MCF 10A (cell line): ENCODE measurements at regions of chr9 and their contacts with region 1.

Region 1: DNA sequence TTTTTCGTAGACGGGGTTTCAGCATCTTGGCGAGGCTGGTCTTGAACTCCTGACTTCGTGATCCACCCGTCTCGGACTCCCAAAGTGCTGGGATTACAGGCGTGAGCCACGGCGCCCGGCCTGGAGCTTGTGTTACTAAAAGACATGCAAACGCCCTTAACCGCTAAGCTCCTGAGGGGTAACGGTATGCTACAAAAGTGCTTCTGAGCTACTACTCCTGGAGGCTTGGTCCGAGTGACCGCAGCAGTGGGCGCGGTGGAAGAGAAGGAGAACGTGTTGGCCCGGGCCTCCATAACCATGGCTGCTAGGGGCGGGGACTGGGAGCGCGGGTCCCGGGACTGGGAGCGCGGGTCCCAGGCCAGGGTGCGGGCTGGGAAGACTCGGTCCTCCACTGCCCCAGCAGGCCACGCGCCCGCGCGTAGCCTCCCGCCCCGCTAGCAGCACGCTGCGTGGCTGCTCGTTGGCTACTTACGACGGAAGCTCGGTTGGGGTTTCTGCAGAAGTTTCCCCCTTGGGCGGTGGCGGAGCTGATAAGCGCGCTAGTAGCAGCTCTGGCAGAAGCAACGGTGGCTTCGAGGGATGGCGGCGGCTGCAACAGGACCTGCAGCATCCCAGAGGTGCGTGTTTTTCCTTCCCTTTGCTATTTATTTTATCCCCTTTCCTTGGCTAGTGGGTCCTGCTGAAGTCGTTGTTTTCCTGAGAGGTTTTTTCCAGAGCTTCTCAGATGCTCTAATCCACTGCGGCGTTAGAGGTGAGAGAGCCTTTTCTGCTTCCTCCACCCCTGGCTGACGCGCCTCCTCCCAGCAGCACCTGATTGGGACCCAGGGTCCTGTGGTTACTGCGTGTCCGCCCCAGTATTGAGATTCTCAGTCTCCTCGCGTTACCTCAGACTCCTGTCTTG is 69.3 kb upstream of the CCDC180 start:
- DNase-seq: peak; percentile 84
- H3K4me3 Mint-ChIP-seq: peak overlapping the region; percentile 92
- H3K27ac Mint-ChIP-seq: peak overlapping the region; percentile 91
- H3K4me1 Mint-ChIP-seq: peaks cover 12% of the 10 kb centered on the region
- H3K27me3 Mint-ChIP-seq: no peaks in the 10 kb centered on the region
- CTCF ChIP-seq: no peak

Region 2: GRCh38 chr9:97109194-97109811 is 128.9 kb before region 1 on chr9:
- CTCF ChIA-PET with region 1: no interaction called
- POLR2A ChIA-PET with region 1: no interaction called
- intact Hi-C with region 1: no loop called
- DNase-seq: peak; percentile 74
- H3K4me3 Mint-ChIP-seq: no peak overlapping the region
- H3K27ac Mint-ChIP-seq: no peak overlapping the region
- H3K4me1 Mint-ChIP-seq: peaks cover 12% of the 10 kb centered on the region
- H3K27me3 Mint-ChIP-seq: no peaks in the 10 kb centered on the region
- CTCF ChIP-seq: peak; percentile 74

Region 3: DNA sequence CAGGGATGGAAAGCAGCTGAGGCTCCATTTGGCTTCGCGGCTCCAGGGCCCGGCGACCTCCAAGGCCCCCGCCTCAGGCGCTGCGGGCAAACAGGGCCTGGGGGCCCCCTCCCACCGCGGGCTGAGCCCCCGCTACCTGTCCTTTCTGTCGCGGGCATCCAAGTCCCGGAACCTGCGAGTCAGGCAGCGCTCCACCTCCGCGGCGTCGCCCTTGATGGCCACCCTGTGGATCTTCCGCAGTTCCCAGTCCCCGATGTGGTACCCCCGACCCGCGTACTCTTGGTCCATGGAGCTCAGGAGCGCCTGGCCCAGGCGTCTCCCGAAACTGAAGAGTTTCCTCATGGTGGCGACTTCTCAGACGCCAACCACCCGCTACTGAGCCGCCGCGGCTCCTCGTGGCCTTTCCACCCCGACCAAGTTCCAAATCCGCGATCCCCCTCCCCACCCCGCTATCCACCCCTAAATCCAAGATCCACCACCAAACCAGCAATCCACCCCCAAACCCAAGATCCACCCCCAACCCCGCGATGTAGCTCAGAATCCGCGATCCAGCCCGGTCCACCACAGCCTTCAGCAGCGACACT is 17.2 kb before region 1 on chr9:
- CTCF ChIA-PET with region 1: interaction called, 3 read pairs
- POLR2A ChIA-PET with region 1: interaction called, 29 read pairs
- intact Hi-C with region 1: no loop called
- DNase-seq: no peak
- H3K4me3 Mint-ChIP-seq: peak overlapping the region; percentile 77
- H3K27ac Mint-ChIP-seq: peak overlapping the region; percentile 69
- H3K4me1 Mint-ChIP-seq: no peaks in the 10 kb centered on the region
- H3K27me3 Mint-ChIP-seq: peaks cover 43% of the 10 kb centered on the region
- CTCF ChIP-seq: no peak

Region 4: GRCh38 chr9:97307091-97307490 is 68.9 kb after region 1 on chr9:
- CTCF ChIA-PET with region 1: no interaction called
- POLR2A ChIA-PET with region 1: no interaction called
- intact Hi-C with region 1: no loop called
- DNase-seq: no peak
- H3K4me3 Mint-ChIP-seq: no peak overlapping the region
- H3K27ac Mint-ChIP-seq: no peak overlapping the region
- H3K4me1 Mint-ChIP-seq: no peaks in the 10 kb centered on the region
- H3K27me3 Mint-ChIP-seq: no peaks in the 10 kb centered on the region
- CTCF ChIP-seq: no peak